T-cell (primary cell): ENCODE measurements at regions of chrX and their contacts with region 1.

Region 1: DNA sequence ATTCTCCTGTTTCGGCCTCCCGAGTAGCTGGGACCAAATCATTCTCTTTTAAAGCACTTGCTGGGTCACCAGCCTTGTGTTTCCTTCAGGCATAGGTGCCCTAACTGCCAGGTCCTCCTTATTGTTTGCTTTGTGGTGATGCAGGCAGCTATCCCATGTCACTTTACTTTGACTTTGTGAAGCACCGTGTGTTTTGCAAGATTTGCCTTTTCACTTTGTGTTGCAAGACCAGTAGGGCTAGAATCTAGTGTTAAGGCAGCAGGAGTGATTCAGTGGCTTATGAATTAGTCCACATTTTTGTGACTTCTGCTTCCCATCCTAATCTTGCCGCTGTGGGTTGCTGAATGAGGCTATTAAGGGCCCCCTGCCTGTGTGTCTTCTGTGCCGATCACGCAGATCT is 20.2 kb downstream of the SYAP1 start:
- DNase-seq: no peak
- ATAC-seq: no peak
- H3K4me3 ChIP-seq: no peak overlapping the region
- H3K4me3 Mint-ChIP-seq: no peak overlapping the region
- H3K27ac ChIP-seq: no peak overlapping the region
- H3K27ac Mint-ChIP-seq: no peak overlapping the region
- H3K4me1 ChIP-seq: no peaks in the 10 kb centered on the region
- H3K4me1 Mint-ChIP-seq: peaks cover 0 to under 1% (median 0%) of the 10 kb centered on the region in 3 donors
- H3K27me3 ChIP-seq: no peaks in the 10 kb centered on the region
- H3K27me3 Mint-ChIP-seq: no peaks in the 10 kb centered on the region

Region 2: DNA sequence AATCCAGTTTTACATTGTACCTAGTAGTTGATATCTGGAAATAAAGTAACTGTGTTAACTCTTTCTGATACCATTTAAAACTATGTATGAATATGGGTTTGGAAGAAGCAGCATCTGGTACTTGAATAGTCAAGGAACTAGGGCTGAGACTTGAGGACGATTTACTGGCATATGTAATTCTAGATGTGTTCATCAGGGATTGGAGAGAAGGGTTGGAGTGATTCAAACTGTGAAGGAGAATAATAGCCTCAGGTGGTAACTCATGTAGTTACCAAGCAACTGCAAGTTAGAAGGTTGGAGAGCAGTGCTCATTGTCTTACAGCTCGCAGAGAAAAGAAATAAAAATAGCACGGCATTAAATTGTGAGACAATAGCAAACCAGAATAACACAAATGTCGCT is 17.1 kb after region 1 on chrX:
- CTCF ChIA-PET with region 1: no interaction called
- POLR2A ChIA-PET with region 1: interaction called in 1 of 2 experiments, 11 read pairs
- DNase-seq: no peak
- ATAC-seq: no peak
- H3K4me3 ChIP-seq: no peak overlapping the region
- H3K4me3 Mint-ChIP-seq: no peak overlapping the region
- H3K27ac ChIP-seq: no peak overlapping the region
- H3K27ac Mint-ChIP-seq: no peak overlapping the region
- H3K4me1 ChIP-seq: no peaks in the 10 kb centered on the region
- H3K4me1 Mint-ChIP-seq: no peaks in the 10 kb centered on the region
- H3K27me3 ChIP-seq: no peaks in the 10 kb centered on the region
- H3K27me3 Mint-ChIP-seq: no peaks in the 10 kb centered on the region

Region 3: GRCh38 chrX:16914058-16914457 is 174.5 kb after region 1 on chrX:
- CTCF ChIA-PET with region 1: no interaction called
- POLR2A ChIA-PET with region 1: no interaction called
- DNase-seq: no peak
- ATAC-seq: no peak
- H3K4me3 ChIP-seq: no peak overlapping the region
- H3K4me3 Mint-ChIP-seq: no peak overlapping the region
- H3K27ac ChIP-seq: no peak overlapping the region
- H3K27ac Mint-ChIP-seq: no peak overlapping the region
- H3K4me1 ChIP-seq: no peaks in the 10 kb centered on the region
- H3K4me1 Mint-ChIP-seq: no peaks in the 10 kb centered on the region
- H3K27me3 ChIP-seq: no peaks in the 10 kb centered on the region
- H3K27me3 Mint-ChIP-seq: peaks cover 0 to 13% of the 10 kb centered on the region in 2 donors

Region 4: GRCh38 chrX:16946361-16946964 is 206.9 kb after region 1 on chrX and contains the start of gene REPS2:
- CTCF ChIA-PET with region 1: no interaction called
- POLR2A ChIA-PET with region 1: no interaction called
- DNase-seq: peak; percentile 48 to 86 (median 76)
- ATAC-seq: peak; percentile 92 to 96 (median 95)
- H3K4me3 ChIP-seq: peak within 1 kb of the TSS; percentile 49 to 51
- H3K4me3 Mint-ChIP-seq: peak within 1 kb of the TSS; percentile 73 to 78 (median 76)
- H3K27ac ChIP-seq: no peak within 1 kb of the TSS
- H3K27ac Mint-ChIP-seq: no peak within 1 kb of the TSS
- H3K4me1 ChIP-seq: peaks cover 0 to 11% of the 10 kb centered on the region in 2 experiments
- H3K4me1 Mint-ChIP-seq: peaks cover 0 to 4% (median 1%) of the 10 kb centered on the region in 3 donors
- H3K27me3 ChIP-seq: peaks cover 0 to 3% of the 10 kb centered on the region in 2 experiments
- H3K27me3 Mint-ChIP-seq: peaks cover 5 to 21% of the 10 kb centered on the region in 2 donors
- total RNA-seq, gene REPS2: 0.38 to 0.70 (median 0.66) TPM